ENCODE measurements at regions of chr16 and their contacts with region 1.

Region 1: GRCh38 chr16:27046958-27047518 is 19.7 kb upstream of the C16orf82 start:
- DNase-seq: no peak
- ATAC-seq: no peak
- H3K4me3 Mint-ChIP-seq: no peak overlapping the region
- H3K27ac Mint-ChIP-seq: no peak overlapping the region
- H3K4me1 Mint-ChIP-seq: no peaks in the 10 kb centered on the region
- H3K27me3 Mint-ChIP-seq: no peaks in the 10 kb centered on the region
- CTCF ChIP-seq: no peak

Region 2: DNA sequence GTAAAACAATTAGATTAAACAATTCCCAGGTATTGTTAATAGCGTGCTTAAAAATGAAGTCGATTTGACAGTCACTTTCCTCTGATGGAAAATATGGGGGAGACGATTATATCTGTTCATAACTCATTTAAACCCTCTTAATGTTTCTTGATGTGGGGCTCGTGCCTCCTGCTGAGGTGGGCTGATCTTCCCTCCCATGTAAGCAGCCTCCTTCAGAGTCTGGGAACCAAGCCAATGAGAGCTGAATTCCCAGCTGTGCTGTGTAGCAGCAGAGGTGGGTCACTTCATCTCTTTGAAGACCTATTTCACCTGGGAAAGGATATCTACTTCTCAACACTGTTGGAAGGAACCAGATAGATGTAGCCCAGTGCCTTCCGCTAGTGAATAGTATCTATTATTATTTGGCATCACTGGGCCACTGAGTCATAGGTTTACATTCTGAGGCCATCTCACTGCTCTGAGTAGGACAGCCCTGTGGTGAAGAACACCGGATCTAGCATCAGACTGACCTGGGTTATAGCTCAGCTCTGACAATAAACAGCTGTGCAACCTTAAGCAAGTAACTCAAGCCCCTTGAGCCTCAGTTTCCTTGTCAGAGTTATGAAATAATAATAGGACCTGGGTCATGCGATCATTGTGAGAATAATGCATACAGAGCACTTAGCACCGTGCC is 65.6 kb before region 1 on chr16:
- CTCF ChIA-PET with region 1: no interaction called
- POLR2A ChIA-PET with region 1: no interaction called
- DNase-seq: no peak
- ATAC-seq: no peak
- H3K4me3 Mint-ChIP-seq: no peak overlapping the region
- H3K27ac Mint-ChIP-seq: no peak overlapping the region
- H3K4me1 Mint-ChIP-seq: peaks cover 32% of the 10 kb centered on the region
- H3K27me3 Mint-ChIP-seq: peaks cover 9% of the 10 kb centered on the region
- CTCF ChIP-seq: no peak

Region 3: DNA sequence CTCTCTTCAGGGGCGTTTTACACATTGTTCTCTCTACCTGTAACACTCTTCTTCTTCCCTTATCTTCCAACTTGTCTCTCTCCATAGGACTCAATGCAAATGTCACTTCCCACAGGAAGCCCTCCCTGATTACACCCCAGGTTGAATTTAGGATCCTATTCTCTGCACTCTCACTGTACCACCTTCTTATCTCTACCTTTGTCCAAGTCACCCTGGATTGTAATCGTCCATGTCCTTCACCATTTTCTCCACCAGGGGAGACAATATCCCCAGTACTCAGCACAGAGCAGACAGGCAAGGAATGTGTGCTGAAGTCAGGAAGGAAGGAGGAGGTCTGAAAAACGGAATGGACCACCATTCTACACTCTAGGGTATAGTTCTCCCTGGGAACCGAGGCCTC is 33.8 kb after region 1 on chr16:
- CTCF ChIA-PET with region 1: no interaction called
- POLR2A ChIA-PET with region 1: interaction called, 13 read pairs
- DNase-seq: peak; percentile 37
- ATAC-seq: peak; percentile 87
- H3K4me3 Mint-ChIP-seq: no peak overlapping the region
- H3K27ac Mint-ChIP-seq: no peak overlapping the region
- H3K4me1 Mint-ChIP-seq: peaks cover 27% of the 10 kb centered on the region
- H3K27me3 Mint-ChIP-seq: peaks cover 3% of the 10 kb centered on the region
- CTCF ChIP-seq: peak; percentile 18; the same call in 1 of the 2 replicates